Tibial artery (tissue), 4 donors: ENCODE measurements at regions of chr2 and their contacts with region 1.

Region 1: DNA sequence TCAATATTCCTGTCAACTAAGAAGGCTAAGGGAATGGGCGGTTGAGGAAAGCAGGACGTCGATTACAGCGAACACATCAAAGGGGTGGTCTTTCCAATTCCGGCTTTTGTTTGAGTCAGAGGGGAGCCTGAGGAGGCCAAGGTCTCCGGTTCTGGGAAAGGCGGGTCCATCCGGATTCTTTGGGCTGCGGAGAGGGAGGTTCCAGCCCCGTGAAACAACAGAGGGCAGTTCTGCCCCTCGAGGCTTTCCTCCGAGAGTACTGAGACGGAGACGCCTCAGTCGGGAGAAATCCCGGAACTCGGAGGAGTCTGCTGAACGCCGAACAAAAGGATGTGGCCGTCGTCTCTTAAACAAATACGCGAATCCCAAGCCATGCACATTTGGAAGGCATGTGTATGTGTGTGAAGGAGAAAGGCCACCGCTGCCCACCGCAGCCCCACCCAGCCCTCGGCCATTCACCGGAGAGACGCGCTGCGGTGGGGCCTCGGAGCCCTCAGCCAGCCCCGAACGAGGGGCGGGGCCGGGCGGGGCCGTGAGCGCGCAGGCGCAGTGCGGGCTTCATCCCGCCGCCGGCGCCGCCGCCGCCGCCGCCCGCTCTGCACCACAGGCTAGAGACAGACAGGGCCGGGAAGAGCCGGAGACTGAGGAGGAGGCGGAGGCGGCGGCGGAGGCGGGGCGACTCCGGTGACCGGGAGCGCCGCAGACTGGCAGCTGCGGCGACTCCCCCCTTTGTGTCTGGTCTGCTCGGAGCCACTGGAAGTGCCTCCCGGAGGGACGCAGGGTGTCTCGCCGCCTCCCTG is at the start of gene BMPR2:
- DNase-seq: peak; percentile 91 to 95
- H3K4me3 ChIP-seq: peak within 1 kb of the TSS; percentile 87 to 98
- H3K27ac ChIP-seq: peak within 1 kb of the TSS; percentile 96 to 97
- H3K4me1 ChIP-seq: peaks cover 0 to 22% (median 12%) of the 10 kb centered on the region in 4 donors
- H3K27me3 ChIP-seq: no peaks in the 10 kb centered on the region
- CTCF ChIP-seq: no peak

Region 2: DNA sequence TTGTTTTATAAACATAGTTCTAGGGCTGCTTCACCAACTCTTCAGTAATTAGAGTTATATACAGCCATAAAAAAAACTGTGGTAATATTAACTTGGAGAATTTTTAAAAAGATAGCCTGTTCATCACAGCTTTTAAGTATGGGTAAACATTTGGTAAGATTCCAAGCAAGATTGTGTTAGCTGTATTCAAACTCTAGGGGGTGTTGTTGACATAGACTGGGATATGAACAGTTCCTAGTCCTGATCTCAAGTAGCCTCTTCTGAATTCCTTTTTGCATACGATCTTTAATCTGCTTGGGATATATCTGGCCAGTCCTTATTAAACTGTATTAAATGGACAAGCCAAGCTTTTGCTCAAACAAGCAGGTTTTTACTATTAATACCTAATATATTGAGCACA is 96.9 kb before region 1 on chr2:
- intact Hi-C with region 1: loop called (anchors 10 kb)
- DNase-seq: no peak
- H3K4me3 ChIP-seq: no peak overlapping the region
- H3K27ac ChIP-seq: peak overlapping the region in 1 of 2 donors; percentile 7
- H3K4me1 ChIP-seq: peaks cover 0 to 4% (median 4%) of the 10 kb centered on the region in 4 donors
- H3K27me3 ChIP-seq: no peaks in the 10 kb centered on the region
- CTCF ChIP-seq: peak; percentile 41 to 42